ENCODE measurements at regions of chr6 and their contacts with region 1.

Region 1: DNA sequence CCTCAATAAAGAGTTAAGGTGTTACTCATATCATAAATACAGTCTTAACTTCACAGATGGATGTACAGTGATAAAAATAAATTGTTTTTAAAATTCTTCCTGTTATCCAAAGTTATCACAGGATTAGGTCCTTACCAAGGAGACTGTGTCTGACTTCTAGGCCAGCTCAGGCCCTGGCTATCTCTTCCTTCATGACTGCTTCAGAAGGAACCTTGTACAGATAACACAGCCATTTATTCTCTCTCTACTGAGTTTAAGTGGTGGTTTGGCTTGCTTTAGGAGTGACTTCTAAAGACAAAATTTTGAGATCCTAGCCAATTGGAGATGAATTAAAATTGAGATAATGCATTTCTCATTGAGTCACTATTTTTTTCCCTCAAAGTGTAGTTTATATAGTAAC is 40.8 kb upstream of the RNF182 start:
- DNase-seq: no peak
- H3K4me3 ChIP-seq: no peak overlapping the region
- H3K27ac ChIP-seq: no peak overlapping the region
- H3K4me1 ChIP-seq: no peaks in the 10 kb centered on the region
- H3K27me3 ChIP-seq: no peaks in the 10 kb centered on the region; the same call in 1 of the 2 replicates
- CTCF ChIP-seq: no peak
- EP300 ChIP-seq: no peak
- RAD21 ChIP-seq: no peak

Region 2: GRCh38 chr6:13873285-13874190 is 10.4 kb before region 1 on chr6:
- CTCF ChIA-PET with region 1: interaction called, 16 read pairs
- POLR2A ChIA-PET with region 1: no interaction called
- DNase-seq: peak; percentile 92
- H3K4me3 ChIP-seq: peak overlapping the region; percentile 38 to 62
- H3K27ac ChIP-seq: no peak overlapping the region
- H3K4me1 ChIP-seq: peaks cover 0 to 10% of the 10 kb centered on the region in 2 experiments; a peak in 1 of 4 replicates
- H3K27me3 ChIP-seq: no peaks in the 10 kb centered on the region
- CTCF ChIP-seq: peak; percentile 71
- EP300 ChIP-seq: no peak
- RAD21 ChIP-seq: peak; percentile 49

Measured in SK-N-SH (cell line).